CD8-positive, alpha-beta T cell (primary cell): ENCODE measurements at regions of chr1 and their contacts with region 1.

Region 1: DNA sequence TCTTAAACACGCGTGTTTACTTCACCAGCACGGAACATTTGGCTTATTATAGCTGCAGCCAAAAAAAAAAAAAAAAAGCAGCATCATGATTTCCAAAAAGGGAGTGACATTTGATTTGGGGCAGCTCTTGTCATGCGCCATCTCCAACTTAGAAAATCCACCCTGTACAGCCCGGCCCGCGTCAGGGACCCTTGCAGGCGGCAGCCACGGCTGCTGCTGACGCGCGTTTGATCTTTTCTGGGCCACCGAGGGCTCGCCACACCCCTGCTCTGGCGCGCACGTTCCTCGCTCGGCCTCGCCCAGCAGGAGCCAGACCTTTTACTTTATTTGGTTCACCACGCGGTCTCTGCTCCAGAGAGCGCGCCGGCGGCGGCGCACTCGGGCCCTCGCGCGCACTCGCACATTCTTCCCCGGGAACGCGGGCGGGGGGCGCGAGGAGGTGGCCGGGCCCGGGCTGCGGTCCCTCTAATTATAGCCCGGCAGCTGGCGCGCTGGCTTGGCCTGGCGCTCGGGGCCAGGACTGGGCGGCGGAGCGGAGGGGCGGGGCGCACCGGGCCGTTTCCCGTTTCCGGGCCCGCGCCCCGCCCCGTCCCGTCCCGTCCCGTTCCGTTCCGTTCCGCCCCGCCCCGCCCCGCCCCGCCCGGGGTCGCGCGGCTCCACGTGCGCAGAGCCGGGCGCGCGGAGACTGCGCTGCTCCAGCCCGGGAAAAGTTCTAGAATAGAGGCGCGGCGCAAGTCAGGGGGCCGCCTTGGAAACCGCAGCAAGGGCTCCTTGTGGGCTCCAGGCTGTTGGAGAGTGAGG is 10.2 kb downstream of the IRF2BP2 start:
- DNase-seq: peak; percentile 52 to 93 (median 78)
- ATAC-seq: peak; percentile 70
- H3K4me3 ChIP-seq: peak overlapping the region; percentile 47 to 54
- H3K4me3 Mint-ChIP-seq: peak overlapping the region; percentile 86
- H3K27ac ChIP-seq: peak overlapping the region; percentile 70 to 89
- H3K27ac Mint-ChIP-seq: peak overlapping the region; percentile 94
- H3K4me1 ChIP-seq: peaks cover 57% of the 10 kb centered on the region
- H3K4me1 Mint-ChIP-seq: peaks cover 55% of the 10 kb centered on the region
- H3K27me3 ChIP-seq: no peaks in the 10 kb centered on the region
- H3K27me3 Mint-ChIP-seq: no peaks in the 10 kb centered on the region
- CTCF ChIP-seq: no peak

Region 2: DNA sequence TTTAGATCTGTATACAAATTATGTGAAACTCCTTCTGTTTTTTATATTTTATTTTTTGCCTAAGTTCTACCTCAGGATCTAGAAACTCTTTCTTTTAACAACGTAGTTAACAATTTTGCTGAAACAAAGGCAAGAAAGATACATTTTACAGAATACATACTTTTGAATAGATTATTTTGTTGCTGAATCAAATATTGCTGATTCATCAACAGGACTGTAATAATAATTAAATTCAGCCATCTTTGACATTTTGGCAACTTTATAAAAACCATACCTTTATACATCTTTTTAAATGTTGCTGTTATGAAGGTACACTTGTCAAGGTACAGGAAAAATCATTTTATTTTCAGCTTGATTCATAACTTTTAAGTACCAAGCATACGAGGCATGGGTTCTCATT is 237.3 kb before region 1 on chr1:
- CTCF ChIA-PET with region 1: no interaction called
- POLR2A ChIA-PET with region 1: no interaction called
- intact Hi-C with region 1: no loop called
- DNase-seq: no peak
- ATAC-seq: no peak
- H3K4me3 ChIP-seq: no peak overlapping the region
- H3K4me3 Mint-ChIP-seq: no peak overlapping the region
- H3K27ac ChIP-seq: no peak overlapping the region
- H3K27ac Mint-ChIP-seq: no peak overlapping the region
- H3K4me1 ChIP-seq: no peaks in the 10 kb centered on the region
- H3K4me1 Mint-ChIP-seq: peaks cover 16% of the 10 kb centered on the region
- H3K27me3 ChIP-seq: no peaks in the 10 kb centered on the region
- H3K27me3 Mint-ChIP-seq: peaks cover 11% of the 10 kb centered on the region
- CTCF ChIP-seq: no peak

Region 3: GRCh38 chr1:234499119-234499942 is 100.5 kb before region 1 on chr1:
- CTCF ChIA-PET with region 1: interaction called, 7 read pairs
- POLR2A ChIA-PET with region 1: no interaction called
- intact Hi-C with region 1: loop called (anchors 1 to 5 kb)
- DNase-seq: peak; percentile 65 to 90 (median 81)
- ATAC-seq: peak; percentile 98
- H3K4me3 ChIP-seq: no peak overlapping the region
- H3K4me3 Mint-ChIP-seq: no peak overlapping the region
- H3K27ac ChIP-seq: no peak overlapping the region
- H3K27ac Mint-ChIP-seq: no peak overlapping the region
- H3K4me1 ChIP-seq: no peaks in the 10 kb centered on the region
- H3K4me1 Mint-ChIP-seq: peaks cover 8% of the 10 kb centered on the region
- H3K27me3 ChIP-seq: no peaks in the 10 kb centered on the region
- H3K27me3 Mint-ChIP-seq: peaks cover 4% of the 10 kb centered on the region
- CTCF ChIP-seq: peak; percentile 80

Region 4: DNA sequence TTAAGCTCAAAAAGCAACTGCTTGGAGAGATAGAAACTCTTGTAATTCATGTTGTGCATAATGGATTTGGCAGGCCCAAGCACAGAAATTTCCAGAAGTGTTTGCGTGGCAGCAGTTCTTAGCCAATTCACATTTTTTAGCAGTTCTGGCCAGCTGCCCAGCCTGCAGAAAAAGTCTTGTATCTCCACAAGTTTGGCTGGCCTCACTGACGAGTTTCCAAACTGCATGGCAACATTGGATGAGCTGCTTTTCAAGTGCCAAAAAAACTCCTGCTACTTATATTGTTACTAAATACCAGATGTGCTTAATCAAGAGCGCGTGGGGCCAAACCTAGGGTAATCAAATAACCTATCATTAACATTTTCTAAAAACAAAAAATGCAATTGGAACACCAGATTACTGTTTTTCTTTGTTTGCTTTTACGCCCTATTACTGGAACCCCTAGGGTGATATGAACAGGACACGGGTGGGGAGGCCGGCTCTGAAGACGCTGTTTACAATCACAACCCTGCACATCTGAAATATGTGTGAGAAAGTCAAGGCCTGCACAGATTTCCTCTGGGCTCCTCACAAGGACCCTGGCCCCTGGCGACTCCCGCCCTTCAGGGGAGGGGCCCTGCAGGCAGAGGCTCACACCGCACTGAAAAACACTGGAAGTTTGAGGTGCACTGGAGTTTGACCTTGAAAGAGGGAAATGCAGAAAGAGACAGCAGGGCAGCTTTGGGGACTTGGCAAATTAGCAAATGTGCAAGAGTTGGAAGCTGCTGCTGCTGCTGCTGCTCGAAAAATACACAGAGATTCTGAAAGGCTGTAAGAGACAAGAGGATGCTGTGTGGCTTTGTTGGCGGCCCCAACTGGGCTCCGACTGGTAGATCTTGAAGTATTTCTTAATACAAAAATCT is 65.6 kb before region 1 on chr1:
- CTCF ChIA-PET with region 1: no interaction called
- POLR2A ChIA-PET with region 1: no interaction called
- intact Hi-C with region 1: no loop called
- DNase-seq: no peak
- ATAC-seq: no peak
- H3K4me3 ChIP-seq: no peak overlapping the region
- H3K4me3 Mint-ChIP-seq: no peak overlapping the region
- H3K27ac ChIP-seq: no peak overlapping the region
- H3K27ac Mint-ChIP-seq: no peak overlapping the region
- H3K4me1 ChIP-seq: no peaks in the 10 kb centered on the region
- H3K4me1 Mint-ChIP-seq: peaks cover 3% of the 10 kb centered on the region
- H3K27me3 ChIP-seq: peaks cover 0 to 2% of the 10 kb centered on the region in 2 experiments
- H3K27me3 Mint-ChIP-seq: peaks cover 2% of the 10 kb centered on the region
- CTCF ChIP-seq: no peak

Region 5: GRCh38 chr1:234676103-234676594 is 76.3 kb after region 1 on chr1:
- CTCF ChIA-PET with region 1: no interaction called
- POLR2A ChIA-PET with region 1: no interaction called
- intact Hi-C with region 1: loop called in 1 of 2 experiments (anchors 2 kb)
- DNase-seq: peak in 8 of 9 experiments; percentile 23 to 74 (median 58)
- ATAC-seq: peak; percentile 80
- H3K4me3 ChIP-seq: peak overlapping the region; percentile 35 to 60
- H3K4me3 Mint-ChIP-seq: peak overlapping the region; percentile 80
- H3K27ac ChIP-seq: no peak overlapping the region
- H3K27ac Mint-ChIP-seq: peak overlapping the region; percentile 60
- H3K4me1 ChIP-seq: peaks cover 8% of the 10 kb centered on the region
- H3K4me1 Mint-ChIP-seq: peaks cover 11% of the 10 kb centered on the region
- H3K27me3 ChIP-seq: no peaks in the 10 kb centered on the region
- H3K27me3 Mint-ChIP-seq: no peaks in the 10 kb centered on the region
- CTCF ChIP-seq: no peak

Region 6: GRCh38 chr1:234722904-234723720 is 123.3 kb after region 1 on chr1:
- CTCF ChIA-PET with region 1: interaction called, 3 read pairs
- POLR2A ChIA-PET with region 1: interaction called, 16 read pairs
- intact Hi-C with region 1: loop called (anchors 1 to 2 kb)
- DNase-seq: peak in 8 of 9 experiments; percentile 37 to 76 (median 58)
- ATAC-seq: peak; percentile 26
- H3K4me3 ChIP-seq: peak overlapping the region; percentile 28 to 34
- H3K4me3 Mint-ChIP-seq: peak overlapping the region; percentile 71
- H3K27ac ChIP-seq: peak overlapping the region; percentile 83 to 96
- H3K27ac Mint-ChIP-seq: peak overlapping the region; percentile 92
- H3K4me1 ChIP-seq: peaks cover 38% of the 10 kb centered on the region
- H3K4me1 Mint-ChIP-seq: peaks cover 61% of the 10 kb centered on the region
- H3K27me3 ChIP-seq: no peaks in the 10 kb centered on the region
- H3K27me3 Mint-ChIP-seq: no peaks in the 10 kb centered on the region
- CTCF ChIP-seq: no peak

Region 7: GRCh38 chr1:234842726-234843641 is 243.2 kb after region 1 on chr1:
- CTCF ChIA-PET with region 1: interaction called, 3 read pairs
- POLR2A ChIA-PET with region 1: no interaction called
- intact Hi-C with region 1: loop called (anchors 1 to 10 kb)
- DNase-seq: peak; percentile 10 to 76 (median 51)
- ATAC-seq: peak; percentile 48
- H3K4me3 ChIP-seq: no peak overlapping the region
- H3K4me3 Mint-ChIP-seq: peak overlapping the region; percentile 49
- H3K27ac ChIP-seq: no peak overlapping the region
- H3K27ac Mint-ChIP-seq: peak overlapping the region; percentile 75
- H3K4me1 ChIP-seq: peaks cover 53% of the 10 kb centered on the region
- H3K4me1 Mint-ChIP-seq: peaks cover 57% of the 10 kb centered on the region
- H3K27me3 ChIP-seq: no peaks in the 10 kb centered on the region
- H3K27me3 Mint-ChIP-seq: no peaks in the 10 kb centered on the region
- CTCF ChIP-seq: no peak

Region 8: GRCh38 chr1:235011599-235012435 is 412.0 kb after region 1 on chr1:
- CTCF ChIA-PET with region 1: interaction called, 4 read pairs
- POLR2A ChIA-PET with region 1: interaction called, 3 read pairs
- intact Hi-C with region 1: loop called (anchors 1 to 2 kb)
- DNase-seq: peak; percentile 81 to 100 (median 90)
- ATAC-seq: peak; percentile 91
- H3K4me3 ChIP-seq: peak overlapping the region; percentile 11 to 47
- H3K4me3 Mint-ChIP-seq: peak overlapping the region; percentile 73
- H3K27ac ChIP-seq: peak overlapping the region; percentile 64 to 87
- H3K27ac Mint-ChIP-seq: peak overlapping the region; percentile 94
- H3K4me1 ChIP-seq: peaks cover 30% of the 10 kb centered on the region
- H3K4me1 Mint-ChIP-seq: peaks cover 54% of the 10 kb centered on the region
- H3K27me3 ChIP-seq: no peaks in the 10 kb centered on the region
- H3K27me3 Mint-ChIP-seq: no peaks in the 10 kb centered on the region
- CTCF ChIP-seq: no peak

Region 9: DNA sequence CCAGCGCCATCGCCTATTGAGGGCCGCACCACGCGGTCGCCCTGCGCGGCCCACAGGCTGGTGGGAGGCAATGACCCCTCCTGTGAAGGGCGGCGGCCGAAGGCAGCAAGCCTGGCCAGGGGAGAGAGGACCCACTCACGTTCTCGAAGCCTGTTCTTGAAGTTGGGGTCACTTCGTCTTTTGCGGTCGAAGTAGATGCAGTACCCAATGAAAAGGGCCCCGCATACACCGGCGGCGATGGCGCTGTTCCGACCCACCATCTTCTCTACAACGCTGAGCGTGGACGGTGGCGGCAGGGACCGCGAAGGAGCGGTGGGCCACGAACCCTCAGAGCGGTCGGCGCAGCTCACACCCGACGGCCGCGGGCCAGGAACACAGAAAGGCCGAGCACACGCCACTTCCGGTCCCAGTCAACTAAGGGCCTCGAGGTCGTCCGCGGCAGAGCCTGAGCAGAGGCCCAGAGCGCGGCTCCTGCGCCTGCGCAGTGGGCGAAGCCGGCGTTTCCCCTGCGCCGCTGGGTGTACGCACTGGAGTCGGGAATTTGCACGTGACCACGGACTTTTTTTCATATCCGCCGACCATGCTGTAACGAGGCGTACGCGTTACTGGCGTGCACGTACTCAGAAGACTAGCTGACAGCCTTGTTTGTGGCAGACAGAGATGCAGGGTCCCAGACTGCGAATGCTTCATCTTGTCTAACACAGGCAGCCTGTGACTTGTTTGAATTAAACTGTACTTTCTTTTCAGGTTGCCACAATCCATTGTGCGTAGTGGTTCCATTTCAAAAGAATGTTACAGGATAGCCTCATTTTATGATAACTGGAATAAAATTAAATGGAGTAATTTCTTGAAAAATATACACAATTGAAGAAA is 528.9 kb after region 1 on chr1 and contains the start of gene TOMM20:
- CTCF ChIA-PET with region 1: no interaction called
- POLR2A ChIA-PET with region 1: no interaction called
- intact Hi-C with region 1: loop called in 1 of 2 experiments (anchors 5 kb)
- DNase-seq: peak; percentile 88 to 98 (median 91)
- ATAC-seq: peak; percentile 88
- H3K4me3 ChIP-seq: peak within 1 kb of the TSS; percentile 83 to 98
- H3K4me3 Mint-ChIP-seq: peak within 1 kb of the TSS; percentile 88
- H3K27ac ChIP-seq: peak within 1 kb of the TSS; percentile 92 to 95
- H3K27ac Mint-ChIP-seq: peak within 1 kb of the TSS; percentile 93
- H3K4me1 ChIP-seq: peaks cover 36% of the 10 kb centered on the region
- H3K4me1 Mint-ChIP-seq: peaks cover 44% of the 10 kb centered on the region
- H3K27me3 ChIP-seq: no peaks in the 10 kb centered on the region
- H3K27me3 Mint-ChIP-seq: no peaks in the 10 kb centered on the region
- CTCF ChIP-seq: no peak
- total RNA-seq, gene TOMM20: 165 to 166 TPM